ENCODE measurements at regions of chr5 and their contacts with region 1.

Region 1: GRCh38 chr5:67209142-67209771 is 12.7 kb upstream of the CD180 start:
- DNase-seq: peak; percentile 77
- H3K4me3 ChIP-seq: no peak overlapping the region
- H3K27ac ChIP-seq: no peak overlapping the region
- H3K4me1 ChIP-seq: peaks cover 3% of the 10 kb centered on the region
- H3K27me3 ChIP-seq: no peaks in the 10 kb centered on the region
- CTCF ChIP-seq: peak; percentile 67
- POLR2A ChIP-seq: no peak

Region 2: DNA sequence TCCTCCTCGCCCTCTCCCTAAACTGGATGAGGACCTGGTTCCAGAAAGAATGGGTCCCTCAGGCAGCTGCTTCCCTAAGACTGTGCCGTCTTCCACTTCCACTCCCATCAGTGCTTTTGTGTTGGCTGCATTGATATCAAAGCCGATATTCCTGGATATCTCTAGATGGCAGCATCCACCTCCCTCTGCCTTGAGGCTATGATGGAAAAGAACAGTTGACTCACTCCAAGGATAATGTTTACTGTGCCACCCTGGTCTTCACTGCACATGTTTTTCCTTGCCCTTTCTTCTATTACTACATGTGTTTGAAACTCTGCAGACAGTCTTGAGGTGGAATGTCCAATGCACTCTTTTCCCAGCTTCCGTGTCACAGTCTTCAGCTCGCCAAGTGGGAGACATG is 401.5 kb before region 1 on chr5:
- CTCF ChIA-PET with region 1: interaction called, 5 read pairs
- POLR2A ChIA-PET with region 1: no interaction called
- dilution Hi-C with region 1: no loop called
- intact Hi-C with region 1: loop called (anchors 1 kb)
- DNase-seq: peak; percentile 75
- H3K4me3 ChIP-seq: no peak overlapping the region
- H3K27ac ChIP-seq: no peak overlapping the region
- H3K4me1 ChIP-seq: no peaks in the 10 kb centered on the region
- H3K27me3 ChIP-seq: peaks cover 9 to 10% of the 10 kb centered on the region in 2 experiments
- CTCF ChIP-seq: peak; percentile 62 to 69
- POLR2A ChIP-seq: no peak

Region 3: GRCh38 chr5:66814146-66814991 is 394.9 kb before region 1 on chr5:
- CTCF ChIA-PET with region 1: interaction called, 10 read pairs
- POLR2A ChIA-PET with region 1: no interaction called
- dilution Hi-C with region 1: no loop called
- intact Hi-C with region 1: loop called (anchors 2 kb)
- DNase-seq: peak; percentile 63
- H3K4me3 ChIP-seq: no peak overlapping the region
- H3K27ac ChIP-seq: no peak overlapping the region
- H3K4me1 ChIP-seq: no peaks in the 10 kb centered on the region
- H3K27me3 ChIP-seq: peaks cover 0 to 2% of the 10 kb centered on the region in 2 experiments
- CTCF ChIP-seq: peak; percentile 62 to 75
- POLR2A ChIP-seq: no peak

Region 4: DNA sequence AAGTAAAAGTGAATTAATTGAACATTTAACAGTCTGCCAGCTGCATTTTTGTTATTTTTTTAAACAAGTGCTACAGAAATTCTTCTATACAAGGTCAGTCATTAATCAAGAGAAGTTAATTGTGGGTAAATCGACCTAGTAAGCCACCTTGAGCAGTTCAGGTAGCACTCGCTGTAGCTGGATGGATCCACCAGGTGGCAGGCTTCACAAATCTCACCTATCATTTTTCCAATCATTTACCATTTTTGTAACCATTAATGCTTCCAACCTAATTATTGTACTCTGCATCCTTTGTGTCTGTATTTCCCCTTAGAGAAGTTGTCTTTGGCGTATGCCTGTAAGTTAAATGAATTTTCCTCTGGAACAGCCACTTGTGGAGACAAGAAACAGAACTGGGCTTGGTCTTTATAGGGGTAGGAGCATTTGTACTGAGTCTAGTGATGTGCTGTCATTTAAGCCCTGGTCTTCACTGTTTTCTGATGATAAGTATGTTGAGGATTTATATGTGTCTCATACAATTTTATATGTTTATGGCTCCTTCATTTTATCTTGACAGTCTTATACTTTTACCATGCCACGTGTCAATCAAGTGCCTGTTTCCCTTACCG is 52.2 kb before region 1 on chr5:
- CTCF ChIA-PET with region 1: interaction called, 126 read pairs
- POLR2A ChIA-PET with region 1: no interaction called
- dilution Hi-C with region 1: no loop called
- intact Hi-C with region 1: loop called (anchors 1 kb)
- DNase-seq: peak; percentile 37
- H3K4me3 ChIP-seq: no peak overlapping the region
- H3K27ac ChIP-seq: no peak overlapping the region
- H3K4me1 ChIP-seq: no peaks in the 10 kb centered on the region
- H3K27me3 ChIP-seq: no peaks in the 10 kb centered on the region
- CTCF ChIP-seq: peak; percentile 65 to 71
- POLR2A ChIP-seq: no peak

Region 5: DNA sequence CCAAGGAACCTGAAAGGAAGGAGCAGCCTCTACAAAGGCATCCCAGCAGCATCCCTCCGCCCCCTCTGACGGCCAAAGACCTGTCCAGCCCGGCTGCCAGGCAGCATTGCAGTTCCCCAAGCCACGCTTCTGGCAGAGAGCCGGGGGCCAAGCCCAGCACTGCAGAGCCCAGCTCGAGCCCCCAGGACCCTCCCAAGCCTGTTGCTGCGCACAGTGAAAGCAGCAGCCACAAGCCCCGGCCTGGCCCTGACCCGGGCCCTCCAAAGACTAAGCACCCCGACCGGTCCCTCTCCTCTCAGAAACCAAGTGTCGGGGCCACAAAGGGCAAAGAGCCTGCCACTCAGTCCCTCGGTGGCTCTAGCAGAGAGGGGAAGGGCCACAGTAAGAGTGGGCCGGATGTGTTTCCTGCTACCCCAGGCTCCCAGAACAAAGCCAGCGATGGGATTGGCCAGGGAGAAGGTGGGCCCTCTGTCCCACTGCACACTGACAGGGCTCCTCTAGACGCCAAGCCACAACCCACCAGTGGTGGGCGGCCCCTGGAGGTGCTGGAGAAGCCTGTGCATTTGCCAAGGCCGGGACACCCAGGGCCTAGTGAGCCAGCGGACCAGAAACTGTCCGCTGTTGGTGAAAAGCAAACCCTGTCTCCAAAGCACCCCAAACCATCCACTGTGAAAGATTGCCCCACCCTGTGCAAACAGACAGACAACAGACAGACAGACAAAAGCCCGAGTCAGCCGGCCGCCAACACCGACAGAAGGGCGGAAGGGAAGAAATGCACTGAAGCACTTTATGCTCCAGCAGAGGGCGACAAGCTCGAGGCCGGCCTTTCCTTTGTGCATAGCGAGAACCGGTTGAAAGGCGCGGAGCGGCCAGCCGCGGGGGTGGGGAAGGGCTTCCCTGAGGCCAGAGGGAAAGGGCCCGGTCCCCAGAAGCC is 43.5 kb before region 1 on chr5:
- CTCF ChIA-PET with region 1: interaction called, 126 read pairs
- POLR2A ChIA-PET with region 1: no interaction called
- dilution Hi-C with region 1: no loop called
- intact Hi-C with region 1: loop called (anchors 1 kb)
- DNase-seq: peak; percentile 74
- H3K4me3 ChIP-seq: no peak overlapping the region
- H3K27ac ChIP-seq: peak overlapping the region; percentile 42
- H3K4me1 ChIP-seq: peaks cover 8% of the 10 kb centered on the region
- H3K27me3 ChIP-seq: no peaks in the 10 kb centered on the region
- CTCF ChIP-seq: peak; percentile 74 to 88
- POLR2A ChIP-seq: no peak

Measured in endothelial cell of umbilical vein (primary cell).